Activated CD8-positive, alpha-beta T cell treated with anti-CD3 and anti-CD28 coated beads, Interleukin-2, amount 10 ng/mL, durations not matched to agents 7 days and 5 days (primary cell): ENCODE measurements at regions of chr15 and their contacts with region 1.

Region 1: DNA sequence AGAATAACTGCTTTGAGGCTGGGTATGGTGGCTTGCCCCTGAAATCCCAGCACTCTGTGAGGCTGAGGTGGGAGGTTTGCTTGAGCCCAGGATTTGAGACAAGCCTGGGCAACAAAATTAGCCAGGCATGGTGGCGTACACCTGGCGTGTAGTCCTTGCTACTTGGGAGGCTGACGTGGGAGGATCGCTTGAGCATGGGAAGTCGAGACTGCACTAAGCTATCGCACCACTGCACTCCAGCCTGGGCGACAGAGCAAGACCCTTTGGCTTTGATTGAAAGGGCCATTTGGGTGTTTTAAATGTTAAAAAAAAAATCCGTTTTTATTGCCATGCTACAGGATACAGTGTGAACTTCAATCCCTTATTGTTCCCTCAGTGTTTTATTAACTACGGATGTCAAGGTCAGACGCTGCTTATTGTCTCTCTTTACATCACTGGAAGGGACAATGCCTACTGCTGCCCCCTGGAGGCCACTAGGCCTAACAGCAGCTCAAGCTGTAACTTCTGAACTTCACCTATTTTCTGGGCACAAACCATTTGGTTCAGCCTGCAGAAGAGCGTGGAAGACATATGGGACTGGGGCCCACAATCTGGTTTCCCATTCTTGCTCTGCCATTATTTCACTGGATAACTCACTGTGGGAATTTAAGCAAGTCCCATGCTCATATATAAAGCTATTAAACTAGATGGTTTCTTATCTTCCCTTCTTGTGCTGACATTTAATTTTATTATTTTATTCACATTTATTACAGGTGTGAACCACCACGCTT is 15.3 kb upstream of the IREB2 start:
- DNase-seq: peak; percentile 77
- ATAC-seq: peak; percentile 67
- H3K4me3 Mint-ChIP-seq: no peak overlapping the region
- H3K27ac Mint-ChIP-seq: no peak overlapping the region
- H3K4me1 Mint-ChIP-seq: peaks cover 21% of the 10 kb centered on the region
- H3K27me3 Mint-ChIP-seq: peaks cover 18% of the 10 kb centered on the region

Region 2: GRCh38 chr15:78308422-78309032 is 114.2 kb before region 1 on chr15:
- CTCF ChIA-PET with region 1: interaction called, 71 read pairs
- POLR2A ChIA-PET with region 1: no interaction called
- DNase-seq: peak; percentile 76
- ATAC-seq: peak; percentile 90
- H3K4me3 Mint-ChIP-seq: no peak overlapping the region
- H3K27ac Mint-ChIP-seq: no peak overlapping the region
- H3K4me1 Mint-ChIP-seq: no peaks in the 10 kb centered on the region
- H3K27me3 Mint-ChIP-seq: no peaks in the 10 kb centered on the region